Heart right ventricle (tissue), 16 donors: ENCODE measurements at regions of chr16 and their contacts with region 1.

Region 1: DNA sequence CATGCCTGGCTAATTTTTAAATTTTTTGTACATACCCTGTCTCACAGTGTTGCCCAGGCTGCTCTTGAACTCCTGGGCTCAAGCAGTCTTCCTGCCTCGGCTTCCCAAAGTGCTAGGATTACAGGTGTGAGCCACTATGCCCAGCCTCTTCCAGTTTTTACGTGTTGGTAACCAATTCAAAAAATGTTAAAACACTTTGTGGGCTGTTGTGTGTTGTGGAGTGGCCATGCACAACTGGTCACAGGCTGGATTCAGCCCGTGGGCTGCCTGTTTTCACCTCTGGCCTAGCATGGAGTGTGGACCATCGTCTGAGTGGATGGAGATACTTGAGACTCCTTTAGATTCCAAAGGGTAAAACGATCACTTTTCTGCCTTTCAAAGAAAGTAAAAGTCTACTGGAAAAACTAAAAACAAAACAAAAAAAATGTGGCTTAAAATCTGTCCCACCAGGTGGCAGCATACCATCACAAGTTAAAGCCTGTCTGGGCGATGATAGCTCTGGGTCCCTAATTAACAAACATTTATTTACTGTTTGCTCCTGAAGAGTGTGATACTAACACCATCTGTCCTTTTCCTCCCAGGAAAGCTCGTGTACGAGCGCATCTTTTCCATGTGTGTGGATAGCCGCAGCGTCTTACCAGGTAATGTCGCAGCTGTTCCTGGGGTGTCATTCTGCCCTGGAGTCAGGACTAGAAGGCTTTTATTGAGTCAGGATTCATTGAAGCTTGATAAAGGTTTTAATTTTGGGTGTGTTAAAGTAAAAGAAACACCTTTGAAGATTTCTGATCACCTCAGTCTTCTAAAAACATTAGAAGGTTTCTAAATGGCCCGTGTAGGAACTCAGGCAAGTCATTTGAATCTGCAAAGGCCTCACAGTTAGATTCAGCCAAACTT is 45.8 kb downstream of the VPS35L start:
- DNase-seq: no peak
- ATAC-seq: peak in 3 of 8 donors; percentile 29 to 42 (median 32)
- H3K4me3 ChIP-seq: no peak overlapping the region
- H3K27ac ChIP-seq: no peak overlapping the region
- H3K4me1 ChIP-seq: peaks cover 0 to 20% (median 0%) of the 10 kb centered on the region in 9 donors
- H3K27me3 ChIP-seq: no peaks in the 10 kb centered on the region
- CTCF ChIP-seq: peak; percentile 55 to 80 (median 72)

Region 2: GRCh38 chr16:19179546-19180490 is 421.5 kb before region 1 on chr16:
- intact Hi-C with region 1: no loop called
- DNase-seq: peak; percentile 55 to 70
- ATAC-seq: peak in 7 of 8 donors; percentile 63 to 83 (median 74)
- H3K4me3 ChIP-seq: no peak overlapping the region
- H3K27ac ChIP-seq: no peak overlapping the region
- H3K4me1 ChIP-seq: peaks cover 0 to 20% (median 0%) of the 10 kb centered on the region in 9 donors
- H3K27me3 ChIP-seq: peaks cover 0 to 8% (median 0%) of the 10 kb centered on the region in 7 donors
- CTCF ChIP-seq: peak; percentile 32 to 79 (median 61)

Region 3: DNA sequence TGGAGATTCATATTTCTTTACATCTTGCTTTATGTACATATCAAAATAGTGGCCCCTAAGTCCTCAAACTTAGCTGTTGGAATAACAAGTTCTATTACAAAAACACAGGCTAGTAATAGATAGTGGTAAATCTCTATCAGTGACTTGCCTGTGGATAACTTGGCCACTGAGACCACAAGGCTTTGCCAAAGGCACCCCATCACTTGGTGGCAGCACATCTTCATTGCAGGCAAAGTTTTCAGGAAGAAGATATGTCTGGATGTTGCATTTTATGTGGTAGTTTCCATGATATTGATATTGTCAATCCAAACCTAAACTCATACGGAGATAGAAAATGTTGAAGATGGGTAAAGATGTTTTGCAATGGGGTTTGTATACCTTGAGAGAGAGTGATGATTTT is 58.2 kb after region 1 on chr16:
- intact Hi-C with region 1: no loop called
- DNase-seq: no peak
- ATAC-seq: no peak
- H3K4me3 ChIP-seq: no peak overlapping the region
- H3K27ac ChIP-seq: no peak overlapping the region
- H3K4me1 ChIP-seq: peaks cover 0 to 5% (median 0%) of the 10 kb centered on the region in 9 donors
- H3K27me3 ChIP-seq: no peaks in the 10 kb centered on the region
- CTCF ChIP-seq: peak in 5 of 9 donors; percentile 17 to 46 (median 28)

Region 4: DNA sequence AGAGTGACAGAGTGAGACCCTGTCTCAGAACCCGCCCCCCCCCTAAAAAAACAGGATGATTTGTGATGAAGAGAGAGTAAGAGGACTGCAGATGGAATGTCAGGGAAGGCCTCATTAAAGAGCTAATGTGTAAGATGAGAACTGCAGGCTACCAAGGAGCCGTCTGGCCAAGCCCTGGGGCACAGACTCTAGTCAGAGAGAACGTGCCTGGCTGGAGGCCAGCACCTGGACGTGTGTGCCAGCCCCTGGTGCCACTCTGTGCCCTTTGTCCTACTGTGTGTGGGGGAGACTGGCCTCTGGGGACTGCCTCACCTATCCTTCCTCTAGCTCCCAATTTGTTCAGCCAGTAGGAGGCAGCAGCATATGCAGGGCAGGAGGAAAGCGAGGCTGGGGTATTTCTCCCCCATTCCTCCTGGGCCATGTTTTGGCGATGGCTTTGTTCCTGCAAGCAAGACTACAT is 79.6 kb after region 1 on chr16:
- intact Hi-C with region 1: loop called in 1 of 10 experiments (anchors 10 kb)
- DNase-seq: no peak
- ATAC-seq: peak in 1 of 8 donors; percentile 50
- H3K4me3 ChIP-seq: no peak overlapping the region
- H3K27ac ChIP-seq: no peak overlapping the region
- H3K4me1 ChIP-seq: peaks cover 0 to 20% (median 0%) of the 10 kb centered on the region in 9 donors
- H3K27me3 ChIP-seq: no peaks in the 10 kb centered on the region
- CTCF ChIP-seq: peak in 4 of 9 donors; percentile 13 to 39 (median 18)

Region 5: GRCh38 chr16:20383106-20384029 is 782.0 kb after region 1 on chr16:
- intact Hi-C with region 1: loop called in 1 of 10 experiments (anchors 10 kb)
- DNase-seq: peak in 1 of 2 donors; percentile 49
- ATAC-seq: peak in 6 of 8 donors; percentile 52 to 80 (median 72)
- H3K4me3 ChIP-seq: no peak overlapping the region
- H3K27ac ChIP-seq: no peak overlapping the region
- H3K4me1 ChIP-seq: peaks cover 0 to 10% (median 0%) of the 10 kb centered on the region in 9 donors
- H3K27me3 ChIP-seq: peaks cover 0 to 29% (median 5%) of the 10 kb centered on the region in 7 donors
- CTCF ChIP-seq: peak; percentile 53 to 83 (median 77)